ENCODE measurements at regions of chr13 and their contacts with region 1.

Region 1: DNA sequence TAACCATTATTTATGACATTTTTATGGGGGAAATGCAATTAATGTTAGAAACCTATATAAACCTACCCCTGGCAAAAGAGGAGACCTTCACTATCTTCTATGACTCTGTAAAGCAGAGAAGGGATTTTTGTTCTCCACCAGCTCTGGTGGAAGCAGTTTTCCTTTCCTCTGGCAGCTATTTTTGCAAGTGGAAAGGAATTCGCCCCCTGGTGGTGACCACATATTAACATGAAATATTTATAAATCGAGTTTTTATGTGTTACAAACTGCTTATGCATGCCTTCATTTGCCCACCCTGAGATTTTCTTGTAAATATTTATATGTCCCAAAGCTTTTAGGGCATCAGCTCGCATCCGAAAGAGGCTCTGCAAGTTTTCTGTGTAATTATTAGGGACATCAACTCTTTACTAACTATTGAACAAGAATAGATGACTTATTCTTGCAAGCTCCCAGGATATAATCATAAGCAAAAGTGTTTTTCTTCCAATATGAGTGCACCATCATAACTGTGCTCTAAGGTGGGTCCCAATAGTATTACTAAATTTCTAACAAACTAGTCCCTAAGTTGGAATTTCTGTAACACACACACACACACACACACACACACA is 62.4 kb downstream of the SERTM1 start:
- DNase-seq: peak in 4 of 6 donors; percentile 17 to 48 (median 24)
- ATAC-seq: peak in 3 of 4 donors; percentile 61 to 72 (median 66)
- H3K4me3 ChIP-seq: no peak overlapping the region
- H3K27ac ChIP-seq: no peak overlapping the region
- H3K4me1 ChIP-seq: no peaks in the 10 kb centered on the region
- H3K27me3 ChIP-seq: no peaks in the 10 kb centered on the region
- CTCF ChIP-seq: peak; percentile 35 to 73 (median 56)

Region 2: GRCh38 chr13:35984776-35985453 is 751.3 kb before region 1 on chr13:
- intact Hi-C with region 1: loop called in 1 of 3 experiments (anchors 5 kb)
- DNase-seq: no peak
- ATAC-seq: no peak
- H3K4me3 ChIP-seq: no peak overlapping the region
- H3K27ac ChIP-seq: no peak overlapping the region
- H3K4me1 ChIP-seq: no peaks in the 10 kb centered on the region
- H3K27me3 ChIP-seq: no peaks in the 10 kb centered on the region
- CTCF ChIP-seq: no peak

Region 3: DNA sequence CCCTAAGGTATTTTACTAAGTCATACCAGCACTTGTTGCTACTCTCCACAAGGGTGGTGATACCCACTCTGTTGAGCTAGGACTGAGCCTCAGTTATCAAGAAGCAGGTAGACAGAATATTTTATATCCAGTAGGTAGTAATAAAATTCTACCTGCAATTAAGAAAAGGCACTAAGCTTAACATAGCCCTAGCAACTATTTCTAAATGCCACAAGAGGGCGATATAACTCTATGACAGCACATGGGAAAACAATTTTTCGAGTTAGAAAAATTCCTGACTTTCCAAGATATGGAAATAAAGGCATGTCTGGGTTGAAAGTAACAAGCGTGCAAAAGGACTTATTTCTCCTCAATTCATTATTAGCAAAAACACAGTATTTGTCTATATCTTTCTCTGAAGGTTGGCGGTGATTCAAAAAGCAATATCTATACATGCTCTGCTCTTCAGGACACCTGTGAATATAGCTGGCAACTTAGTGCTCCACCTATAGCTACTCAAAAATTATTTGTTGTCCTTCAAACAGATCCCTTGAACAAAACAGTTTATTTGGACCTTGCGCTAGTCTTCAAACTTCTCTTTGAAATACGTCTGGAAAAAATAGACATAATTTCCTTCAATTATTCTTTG is 453.3 kb before region 1 on chr13:
- intact Hi-C with region 1: loop called in 1 of 3 experiments (anchors 10 kb)
- DNase-seq: no peak
- ATAC-seq: peak; percentile 60 to 84 (median 75)
- H3K4me3 ChIP-seq: no peak overlapping the region
- H3K27ac ChIP-seq: no peak overlapping the region
- H3K4me1 ChIP-seq: no peaks in the 10 kb centered on the region
- H3K27me3 ChIP-seq: no peaks in the 10 kb centered on the region
- CTCF ChIP-seq: peak; percentile 46 to 86 (median 76)

Region 4: GRCh38 chr13:36420437-36420891 is 315.8 kb before region 1 on chr13:
- intact Hi-C with region 1: loop called in 1 of 3 experiments (anchors 10 kb)
- DNase-seq: peak; percentile 43 to 76 (median 68)
- ATAC-seq: peak; percentile 82 to 94 (median 92)
- H3K4me3 ChIP-seq: no peak overlapping the region
- H3K27ac ChIP-seq: no peak overlapping the region
- H3K4me1 ChIP-seq: peaks cover 0 to 8% (median 8%) of the 10 kb centered on the region in 3 donors
- H3K27me3 ChIP-seq: no peaks in the 10 kb centered on the region
- CTCF ChIP-seq: peak; percentile 59 to 82 (median 68)

Region 5: GRCh38 chr13:36447501-36447900 is 288.7 kb before region 1 on chr13:
- intact Hi-C with region 1: no loop called
- DNase-seq: no peak
- ATAC-seq: no peak
- H3K4me3 ChIP-seq: no peak overlapping the region
- H3K27ac ChIP-seq: no peak overlapping the region
- H3K4me1 ChIP-seq: no peaks in the 10 kb centered on the region
- H3K27me3 ChIP-seq: no peaks in the 10 kb centered on the region
- CTCF ChIP-seq: no peak

Region 6: GRCh38 chr13:37495046-37495445 is 758.8 kb after region 1 on chr13:
- intact Hi-C with region 1: no loop called
- DNase-seq: no peak
- ATAC-seq: peak in 2 of 4 donors; percentile 23 to 53
- H3K4me3 ChIP-seq: no peak overlapping the region
- H3K27ac ChIP-seq: no peak overlapping the region
- H3K4me1 ChIP-seq: no peaks in the 10 kb centered on the region
- H3K27me3 ChIP-seq: no peaks in the 10 kb centered on the region
- CTCF ChIP-seq: no peak